AG04449 (cell line): ENCODE measurements at regions of chr16 and their contacts with region 1.

Region 1: DNA sequence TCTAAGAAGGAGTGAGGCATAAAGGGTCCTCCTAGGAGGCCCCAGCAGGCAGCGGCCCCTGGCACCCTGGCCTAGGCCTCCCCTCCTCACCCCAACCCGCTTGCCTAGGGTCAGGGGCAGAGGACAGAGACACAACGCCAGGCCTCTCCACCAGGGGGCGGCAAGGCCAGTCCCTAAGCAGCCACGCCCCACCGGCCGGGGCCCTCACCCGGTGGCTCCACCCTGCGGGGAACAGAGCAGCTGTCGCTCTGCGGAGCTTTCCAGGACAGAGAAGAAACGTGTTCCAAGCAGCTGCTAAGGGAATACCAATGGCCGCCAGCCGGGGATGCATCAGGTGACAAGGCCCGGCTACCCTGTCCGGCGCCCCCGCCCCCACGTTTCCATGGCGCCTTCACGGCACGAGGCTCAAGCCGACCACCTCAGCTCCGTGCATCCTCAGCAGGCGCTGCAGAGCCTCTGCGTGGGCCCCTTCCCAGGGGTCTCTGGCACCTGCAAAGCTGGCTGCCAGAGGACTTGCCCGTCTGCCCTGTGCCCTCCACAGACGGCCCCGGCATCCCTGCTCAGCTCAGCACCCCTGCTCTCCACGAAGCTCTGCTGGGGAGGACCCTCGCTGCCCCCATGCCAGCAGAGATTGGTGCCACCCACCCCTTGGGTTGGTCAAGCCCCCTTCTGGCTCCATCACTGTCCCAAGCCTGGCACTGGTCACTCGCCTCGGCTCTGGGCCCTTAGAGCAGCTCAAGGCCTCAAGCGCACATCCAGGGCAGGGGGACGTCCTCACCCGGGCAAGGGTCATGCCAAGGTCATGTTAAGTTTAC is 5.6 kb downstream of the ZNF598 start:
- DNase-seq: no peak
- H3K4me3 ChIP-seq: peak overlapping the region; percentile 6; the same call in 1 of the 2 replicates
- CTCF ChIP-seq: peak; percentile 97

Region 2: DNA sequence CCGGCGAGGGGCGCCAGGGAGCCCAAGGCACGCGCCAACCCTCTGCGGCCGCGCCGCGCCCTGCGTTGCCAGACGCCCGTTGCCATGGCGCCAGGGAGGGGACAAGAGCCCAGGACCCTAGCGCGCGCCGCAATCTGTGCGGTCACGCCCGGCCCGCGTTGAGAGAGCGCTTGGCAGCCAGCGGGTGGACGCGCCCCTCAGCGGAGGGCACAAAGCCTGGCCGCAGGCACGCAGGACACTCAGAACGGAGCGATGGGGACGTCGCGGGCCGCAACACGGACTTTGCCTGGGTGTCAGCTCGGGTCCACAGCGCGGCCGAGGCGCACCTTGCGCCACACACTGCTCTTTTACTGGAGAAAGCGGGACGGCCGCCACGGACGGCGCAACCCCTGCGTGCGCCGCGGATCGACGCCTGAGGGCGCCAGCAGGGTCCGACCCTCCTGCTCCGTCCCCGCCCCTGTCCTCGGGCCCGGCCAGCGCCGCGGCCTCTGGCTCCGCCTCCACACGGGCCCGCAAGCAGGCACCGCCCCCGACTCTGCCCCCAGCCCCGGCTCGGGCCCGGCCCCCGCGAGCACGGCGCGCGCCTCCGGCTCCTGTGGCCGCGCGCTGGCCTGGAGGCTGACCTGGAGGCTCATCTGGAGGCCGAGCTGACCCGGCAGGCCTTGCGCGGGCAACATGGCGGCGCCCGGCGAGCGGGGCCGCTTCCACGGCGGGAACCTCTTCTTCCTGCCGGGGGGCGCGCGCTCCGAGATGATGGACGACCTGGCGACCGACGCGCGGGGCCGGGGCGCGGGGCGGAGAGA is 20.3 kb before region 1 on chr16 and contains the start of gene GFER:
- CTCF ChIA-PET with region 1: interaction called, 163 read pairs
- POLR2A ChIA-PET with region 1: interaction called, 3 read pairs
- DNase-seq: peak; percentile 26
- H3K4me3 ChIP-seq: peak within 1 kb of the TSS; percentile 71
- CTCF ChIP-seq: peak; percentile 66

Region 3: GRCh38 chr16:2016407-2016922 is 12.4 kb after region 1 on chr16:
- CTCF ChIA-PET with region 1: interaction called, 38 read pairs
- POLR2A ChIA-PET with region 1: no interaction called
- DNase-seq: no peak
- H3K4me3 ChIP-seq: no peak overlapping the region
- CTCF ChIP-seq: peak; percentile 50

Region 4: GRCh38 chr16:2047330-2048115 is 43.5 kb after region 1 on chr16 and contains the starts of genes NTHL1 and TSC2:
- CTCF ChIA-PET with region 1: interaction called, 12 read pairs
- POLR2A ChIA-PET with region 1: no interaction called
- DNase-seq: peak; percentile 70
- H3K4me3 ChIP-seq: peak within 1 kb of the TSS; percentile 86
- CTCF ChIP-seq: peak; percentile 48

Region 5: GRCh38 chr16:2147981-2148671 is 144.1 kb after region 1 on chr16 and contains the start of gene RAB26:
- CTCF ChIA-PET with region 1: interaction called, 176 read pairs
- POLR2A ChIA-PET with region 1: no interaction called
- DNase-seq: no peak
- H3K4me3 ChIP-seq: peak within 1 kb of the TSS; percentile 48
- CTCF ChIP-seq: no peak

Region 6: GRCh38 chr16:2459647-2460390 is 455.8 kb after region 1 on chr16 and contains the start of gene TEDC2:
- CTCF ChIA-PET with region 1: no interaction called
- POLR2A ChIA-PET with region 1: no interaction called
- DNase-seq: peak; percentile 38
- H3K4me3 ChIP-seq: peak within 1 kb of the TSS; percentile 67
- CTCF ChIP-seq: no peak